Common myeloid progenitor, CD34-positive (primary cell): ENCODE measurements at regions of chr22 and their contacts with region 1.

Region 1: DNA sequence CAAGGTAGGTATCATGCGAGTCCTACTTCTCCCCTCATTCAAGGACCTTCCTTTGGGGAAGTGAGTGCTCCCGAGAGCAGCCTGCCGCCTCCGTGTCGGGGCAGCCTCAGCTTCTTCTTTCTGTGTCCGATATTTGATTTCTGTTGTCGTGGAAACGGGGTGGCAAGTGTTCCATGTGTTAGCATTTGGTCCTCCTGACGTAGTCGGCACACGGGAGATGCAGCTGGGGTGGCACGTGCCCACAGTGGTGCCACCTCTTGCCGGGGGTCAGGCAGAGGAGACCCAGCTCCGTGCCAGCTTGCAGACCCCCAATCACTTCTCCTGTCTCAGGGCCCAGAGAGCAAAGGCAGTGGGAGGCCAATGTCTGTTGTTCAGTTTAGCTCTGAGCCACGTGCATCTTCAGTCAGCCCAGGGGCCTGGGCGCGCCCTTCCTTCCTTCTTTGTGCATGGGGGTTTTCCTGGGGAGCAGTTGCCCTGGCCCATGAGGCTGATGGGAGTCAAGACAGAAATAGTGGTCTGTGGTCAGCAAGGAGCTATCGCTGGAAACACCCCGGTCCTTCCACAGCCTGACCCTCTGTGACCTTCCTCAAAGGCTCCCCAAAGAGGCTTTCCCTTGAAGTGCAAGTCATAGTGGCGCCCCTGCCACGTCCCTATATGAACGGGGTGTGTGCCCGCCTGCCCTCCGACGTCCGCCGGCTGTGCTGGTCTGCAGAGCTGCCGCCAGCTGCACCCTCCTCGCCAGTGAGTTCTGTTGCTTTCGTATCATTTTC is 44.5 kb downstream of the PARVB start:
- DNase-seq: peak; percentile 89 to 99 (median 97)
- H3K4me3 ChIP-seq: peak overlapping the region in 3 of 7 experiments; percentile 22 to 54 (median 34)
- H3K27ac ChIP-seq: peak overlapping the region; percentile 80 to 91
- H3K4me1 ChIP-seq: peaks cover 0 to 41% (median 33%) of the 10 kb centered on the region in 4 experiments
- H3K27me3 ChIP-seq: no peaks in the 10 kb centered on the region

Region 2: GRCh38 chr22:44026630-44027511 is 41.7 kb before region 1 on chr22:
- CTCF ChIA-PET with region 1: interaction called, 29 read pairs
- POLR2A ChIA-PET with region 1: interaction called, 23 read pairs
- DNase-seq: peak; percentile 85 to 94 (median 94)
- H3K4me3 ChIP-seq: peak overlapping the region in 6 of 7 experiments; percentile 29 to 75 (median 55)
- H3K27ac ChIP-seq: peak overlapping the region; percentile 85 to 91
- H3K4me1 ChIP-seq: peaks cover 4 to 77% (median 59%) of the 10 kb centered on the region in 4 experiments
- H3K27me3 ChIP-seq: no peaks in the 10 kb centered on the region

Region 3: GRCh38 chr22:44049486-44050231 is 18.9 kb before region 1 on chr22:
- CTCF ChIA-PET with region 1: interaction called, 4 read pairs
- POLR2A ChIA-PET with region 1: interaction called, 14 read pairs
- DNase-seq: peak in 2 of 3 donors; percentile 58 to 68
- H3K4me3 ChIP-seq: peak overlapping the region in 2 of 7 experiments; percentile 25 to 57
- H3K27ac ChIP-seq: peak overlapping the region in 1 of 2 experiments; percentile 52
- H3K4me1 ChIP-seq: peaks cover 4 to 69% (median 50%) of the 10 kb centered on the region in 4 experiments
- H3K27me3 ChIP-seq: no peaks in the 10 kb centered on the region

Region 4: GRCh38 chr22:44147821-44148574 is 79.4 kb after region 1 on chr22:
- CTCF ChIA-PET with region 1: no interaction called
- POLR2A ChIA-PET with region 1: no interaction called
- DNase-seq: no peak
- H3K4me3 ChIP-seq: no peak overlapping the region
- H3K27ac ChIP-seq: no peak overlapping the region
- H3K4me1 ChIP-seq: no peaks in the 10 kb centered on the region
- H3K27me3 ChIP-seq: no peaks in the 10 kb centered on the region